Activated B cell treated with CpG ODN at 0.5 μM for 24 hours (primary cell): ENCODE measurements at regions of chr2 and their contacts with region 1.

Region 1: GRCh38 chr2:99180755-99181623 is at the starts of genes MITD1 and MRPL30:
- DNase-seq: peak; percentile 83
- ATAC-seq: peak; percentile 94
- H3K4me3 Mint-ChIP-seq: peak within 1 kb of the TSS; percentile 99
- H3K27ac Mint-ChIP-seq: peak within 1 kb of the TSS; percentile 95
- H3K4me1 Mint-ChIP-seq: peaks cover 63% of the 10 kb centered on the region
- H3K27me3 Mint-ChIP-seq: no peaks in the 10 kb centered on the region
- CTCF ChIP-seq: no peak
- total RNA-seq, gene MITD1: 54.1 and 59.8 TPM in 2 replicates
- total RNA-seq, gene MRPL30: 18.6 and 21.4 TPM in 2 replicates

Region 2: GRCh38 chr2:98608116-98608999 is 572.6 kb before region 1 on chr2 and contains the starts of genes COA5 and UNC50:
- CTCF ChIA-PET with region 1: no interaction called
- POLR2A ChIA-PET with region 1: interaction called, 4 read pairs
- intact Hi-C with region 1: loop called (anchors 1 kb)
- DNase-seq: peak; percentile 88
- ATAC-seq: peak; percentile 91
- H3K4me3 Mint-ChIP-seq: peak within 1 kb of the TSS; percentile 93
- H3K27ac Mint-ChIP-seq: peak within 1 kb of the TSS; percentile 86
- H3K4me1 Mint-ChIP-seq: peaks cover 55% of the 10 kb centered on the region
- H3K27me3 Mint-ChIP-seq: no peaks in the 10 kb centered on the region
- CTCF ChIP-seq: no peak
- total RNA-seq, gene COA5: 31.5 and 37.6 TPM in 2 replicates
- total RNA-seq, gene UNC50: 35.3 and 36.3 TPM in 2 replicates

Region 3: GRCh38 chr2:98731041-98731893 is 449.7 kb before region 1 on chr2 and contains the start of gene MGAT4A:
- CTCF ChIA-PET with region 1: no interaction called
- POLR2A ChIA-PET with region 1: interaction called, 4 read pairs
- intact Hi-C with region 1: loop called (anchors 5 kb)
- DNase-seq: peak; percentile 76
- ATAC-seq: peak; percentile 87
- H3K4me3 Mint-ChIP-seq: peak within 1 kb of the TSS; percentile 83
- H3K27ac Mint-ChIP-seq: peak within 1 kb of the TSS; percentile 84
- H3K4me1 Mint-ChIP-seq: peaks cover 56% of the 10 kb centered on the region
- H3K27me3 Mint-ChIP-seq: no peaks in the 10 kb centered on the region
- CTCF ChIP-seq: no peak
- total RNA-seq, gene MGAT4A: 12.6 and 15.7 TPM in 2 replicates

Region 4: GRCh38 chr2:99066075-99066958 is 114.7 kb before region 1 on chr2:
- CTCF ChIA-PET with region 1: interaction called, 7 read pairs
- POLR2A ChIA-PET with region 1: interaction called, 5 read pairs
- intact Hi-C with region 1: loop called (anchors 5 kb)
- DNase-seq: no peak
- ATAC-seq: peak; percentile 85
- H3K4me3 Mint-ChIP-seq: no peak overlapping the region
- H3K27ac Mint-ChIP-seq: no peak overlapping the region
- H3K4me1 Mint-ChIP-seq: no peaks in the 10 kb centered on the region
- H3K27me3 Mint-ChIP-seq: no peaks in the 10 kb centered on the region
- CTCF ChIP-seq: no peak

Region 5: DNA sequence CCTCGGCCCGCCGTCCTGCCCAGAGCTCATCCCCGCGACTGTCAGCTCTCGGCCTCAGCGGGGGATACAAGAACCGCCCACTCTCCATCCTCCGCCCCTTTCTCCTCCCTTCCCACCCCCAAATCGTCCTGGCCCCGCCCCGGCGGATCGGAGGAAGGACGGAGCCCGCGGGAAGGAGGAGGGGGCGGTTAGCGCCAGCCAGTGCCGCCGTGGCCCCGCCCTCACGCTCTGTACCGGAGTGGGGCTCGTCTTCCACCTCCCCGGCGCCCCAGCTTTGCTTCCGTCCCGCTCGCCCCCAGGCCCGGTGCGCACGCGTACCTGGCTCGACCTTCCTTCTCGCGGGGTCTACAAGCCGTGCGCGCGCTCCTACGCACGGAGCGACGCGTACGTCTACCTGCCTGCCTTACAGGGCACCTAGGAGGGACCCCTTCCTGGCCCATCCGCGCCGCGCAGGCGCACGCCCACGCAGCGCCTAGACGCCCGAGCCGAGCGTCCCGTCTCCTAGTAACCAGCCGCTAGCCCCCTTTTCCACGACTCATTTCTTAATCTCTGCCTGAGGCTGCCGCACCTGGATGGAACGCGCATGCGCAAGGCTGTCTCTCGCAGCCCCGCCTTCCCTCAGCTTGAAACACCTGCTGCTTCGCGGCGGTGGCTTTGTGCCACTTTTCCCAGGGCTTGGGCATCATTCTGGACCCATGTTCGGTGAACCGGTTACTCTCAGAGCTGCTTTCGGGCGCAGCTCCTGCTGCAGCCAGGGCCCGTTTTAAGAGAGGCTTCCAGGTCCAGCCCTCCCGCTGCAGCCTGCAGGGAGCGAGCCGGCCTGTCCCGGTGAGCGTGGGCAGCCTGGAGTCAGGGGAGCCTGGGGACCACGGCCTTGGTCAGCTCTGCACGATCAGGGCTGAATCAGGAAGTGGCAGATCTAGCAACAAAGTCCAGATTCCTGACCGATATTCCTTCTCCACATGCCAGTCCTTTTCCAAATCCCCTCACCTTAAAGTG is 39.6 kb before region 1 on chr2 and contains the start of gene C2orf15:
- CTCF ChIA-PET with region 1: interaction called, 5 read pairs
- POLR2A ChIA-PET with region 1: interaction called, 23 read pairs
- intact Hi-C with region 1: loop called (anchors 1 kb)
- DNase-seq: peak; percentile 96
- ATAC-seq: peak; percentile 88
- H3K4me3 Mint-ChIP-seq: peak within 1 kb of the TSS; percentile 97
- H3K27ac Mint-ChIP-seq: peak within 1 kb of the TSS; percentile 96
- H3K4me1 Mint-ChIP-seq: peaks cover 26% of the 10 kb centered on the region
- H3K27me3 Mint-ChIP-seq: no peaks in the 10 kb centered on the region
- CTCF ChIP-seq: no peak
- total RNA-seq, gene C2orf15: 0.69 and 1.2 TPM in 2 replicates

Region 6: GRCh38 chr2:101001691-101002561 is 1820.9 kb after region 1 on chr2 and contains the start of gene RPL31:
- CTCF ChIA-PET with region 1: no interaction called
- POLR2A ChIA-PET with region 1: no interaction called
- intact Hi-C with region 1: loop called (anchors 1 kb)
- DNase-seq: peak; percentile 86
- ATAC-seq: peak; percentile 95
- H3K4me3 Mint-ChIP-seq: peak within 1 kb of the TSS; percentile 97
- H3K27ac Mint-ChIP-seq: peak within 1 kb of the TSS; percentile 95
- H3K4me1 Mint-ChIP-seq: peaks cover 38% of the 10 kb centered on the region
- H3K27me3 Mint-ChIP-seq: no peaks in the 10 kb centered on the region
- CTCF ChIP-seq: no peak
- total RNA-seq, gene RPL31: 1,828 and 2,370 TPM in 2 replicates